Activated T-helper 1 cell treated with anti-CD3 and anti-CD28 coated beads, Interleukin-12 subunit alpha, Interleukin-12 subunit beta, Interleukin-2, Interleukin-4 antibody, amounts not matched to agents 30 ng/mL and 10 ng/mL and 1 ng/mL, durations not matched to agents 14 hours and 24 hours and 36 hours (primary cell): ENCODE measurements at regions of chr4 and their contacts with region 1.

Region 1: DNA sequence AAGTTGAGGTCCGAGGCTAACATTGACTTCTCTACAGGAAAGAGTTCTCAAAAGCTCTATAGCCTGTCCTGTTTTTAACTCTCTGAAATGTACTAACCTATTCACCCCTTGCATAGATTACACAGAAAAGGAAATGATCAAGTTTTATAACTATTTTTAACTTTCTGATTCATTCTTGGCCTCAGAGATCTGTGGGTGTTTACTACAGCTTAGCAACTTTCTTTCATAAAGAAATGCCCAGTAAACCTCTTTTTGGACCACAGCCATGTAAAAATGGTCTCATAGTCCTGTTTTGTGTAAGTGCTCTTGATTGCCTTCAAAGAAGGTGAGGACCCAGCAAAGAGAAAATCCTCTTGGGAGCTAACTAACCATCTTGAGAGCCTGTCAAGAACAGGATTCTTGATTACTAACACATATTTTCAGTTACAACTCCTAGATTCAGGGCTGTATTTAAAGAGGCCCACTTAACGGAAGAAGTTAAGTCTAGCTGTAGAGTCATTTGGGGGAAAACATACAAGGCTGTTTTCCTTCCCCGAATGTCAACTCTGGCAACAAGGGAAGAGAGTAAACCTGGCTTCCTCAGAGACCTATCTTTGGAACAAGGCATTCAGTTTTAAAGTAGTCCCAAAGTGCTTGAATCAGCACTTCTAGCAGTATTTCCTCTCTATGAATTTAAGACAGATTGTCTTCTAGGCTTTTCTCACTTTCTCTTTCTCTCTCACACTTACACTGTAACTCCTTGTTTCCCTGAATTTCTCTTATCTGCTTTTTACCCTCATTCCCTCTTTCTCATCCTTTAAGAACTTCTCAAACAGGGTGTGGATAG is 78.2 kb downstream of the IL21 start:
- DNase-seq: no peak
- H3K4me3 Mint-ChIP-seq: peak overlapping the region; percentile 71
- H3K27ac Mint-ChIP-seq: peak overlapping the region; percentile 93
- H3K4me1 Mint-ChIP-seq: peaks cover 85% of the 10 kb centered on the region
- H3K27me3 Mint-ChIP-seq: no peaks in the 10 kb centered on the region

Region 2: DNA sequence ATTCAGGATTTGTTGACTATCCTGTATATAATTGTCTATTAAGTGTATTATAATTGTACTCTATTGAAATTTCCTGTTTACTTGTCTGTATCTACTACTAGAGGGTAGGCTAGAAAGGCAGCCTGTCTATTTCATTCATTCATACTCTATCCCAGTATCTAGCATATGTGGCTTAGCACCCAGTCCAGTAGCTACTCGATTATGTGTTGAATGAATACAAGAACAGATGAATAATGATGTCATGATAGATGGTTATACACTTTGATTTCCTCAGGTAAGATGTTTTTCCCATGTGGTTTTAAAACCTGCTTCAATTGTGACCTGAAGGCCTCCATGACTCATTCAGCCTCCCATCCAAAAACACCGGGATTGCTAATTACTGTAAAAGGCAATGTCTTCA is 10.3 kb after region 1 on chr4:
- intact Hi-C with region 1: loop called (anchors 1 kb)
- DNase-seq: no peak
- H3K4me3 Mint-ChIP-seq: no peak overlapping the region
- H3K27ac Mint-ChIP-seq: peak overlapping the region; percentile 28
- H3K4me1 Mint-ChIP-seq: peaks cover 79% of the 10 kb centered on the region
- H3K27me3 Mint-ChIP-seq: no peaks in the 10 kb centered on the region

Region 3: DNA sequence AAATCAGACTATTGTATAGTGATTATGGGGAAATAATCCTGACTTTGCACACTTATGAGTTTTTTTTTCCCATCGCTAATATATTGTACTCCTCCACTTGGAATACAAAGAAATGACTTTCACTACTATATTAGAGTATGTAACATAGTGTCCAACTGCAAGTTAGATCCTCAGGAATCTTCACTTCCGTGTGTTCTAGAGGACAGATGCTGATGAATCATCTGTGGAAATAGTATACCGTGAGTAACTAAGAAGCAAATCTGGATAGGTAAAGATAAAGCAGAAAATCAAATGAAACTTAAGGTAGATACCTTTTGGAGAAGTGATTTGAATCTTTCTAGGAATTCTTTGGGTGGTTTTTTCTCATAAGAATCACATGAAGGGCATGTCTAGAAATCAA is 69.9 kb after region 1 on chr4:
- intact Hi-C with region 1: no loop called
- DNase-seq: no peak
- H3K4me3 Mint-ChIP-seq: no peak overlapping the region
- H3K27ac Mint-ChIP-seq: no peak overlapping the region
- H3K4me1 Mint-ChIP-seq: peaks cover 37% of the 10 kb centered on the region
- H3K27me3 Mint-ChIP-seq: no peaks in the 10 kb centered on the region

Region 4: DNA sequence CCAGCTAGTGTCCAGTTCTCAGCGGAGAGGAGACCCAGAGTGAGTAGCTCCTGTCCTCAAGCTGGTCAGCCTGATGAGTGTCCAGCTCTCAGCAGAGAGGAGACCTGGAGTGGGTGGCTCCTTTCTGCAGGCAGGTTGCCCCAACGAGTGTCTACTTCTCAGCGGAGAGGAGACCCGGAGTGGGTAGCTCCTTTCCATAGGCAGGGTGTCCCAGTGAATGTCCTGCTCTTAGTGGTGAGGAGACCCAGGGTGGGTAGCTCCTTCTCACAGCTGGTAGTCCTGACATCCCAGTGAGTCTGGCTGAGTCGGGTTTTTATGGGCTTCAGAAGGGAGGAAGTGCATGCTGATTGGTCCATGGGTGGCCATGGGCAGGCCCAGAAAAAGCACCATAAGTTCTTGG is 435.5 kb after region 1 on chr4:
- intact Hi-C with region 1: no loop called
- DNase-seq: no peak
- H3K4me3 Mint-ChIP-seq: no peak overlapping the region
- H3K27ac Mint-ChIP-seq: no peak overlapping the region
- H3K4me1 Mint-ChIP-seq: no peaks in the 10 kb centered on the region
- H3K27me3 Mint-ChIP-seq: no peaks in the 10 kb centered on the region